Psoas muscle (tissue), 8 donors: ENCODE measurements at regions of chr17 and their contacts with region 1.

Region 1: GRCh38 chr17:76452660-76453430 is at the start of gene UBE2O:
- DNase-seq: peak; percentile 90 to 94
- ATAC-seq: peak; percentile 94 to 96 (median 96)
- H3K4me3 ChIP-seq: peak within 1 kb of the TSS; percentile 90
- H3K27ac ChIP-seq: peak within 1 kb of the TSS; percentile 89
- H3K4me1 ChIP-seq: peaks cover 31% of the 10 kb centered on the region
- H3K27me3 ChIP-seq: no peaks in the 10 kb centered on the region
- CTCF ChIP-seq: peak; percentile 33
- total RNA-seq, gene UBE2O: 37.3 to 45.5 (median 39.7) TPM

Region 2: DNA sequence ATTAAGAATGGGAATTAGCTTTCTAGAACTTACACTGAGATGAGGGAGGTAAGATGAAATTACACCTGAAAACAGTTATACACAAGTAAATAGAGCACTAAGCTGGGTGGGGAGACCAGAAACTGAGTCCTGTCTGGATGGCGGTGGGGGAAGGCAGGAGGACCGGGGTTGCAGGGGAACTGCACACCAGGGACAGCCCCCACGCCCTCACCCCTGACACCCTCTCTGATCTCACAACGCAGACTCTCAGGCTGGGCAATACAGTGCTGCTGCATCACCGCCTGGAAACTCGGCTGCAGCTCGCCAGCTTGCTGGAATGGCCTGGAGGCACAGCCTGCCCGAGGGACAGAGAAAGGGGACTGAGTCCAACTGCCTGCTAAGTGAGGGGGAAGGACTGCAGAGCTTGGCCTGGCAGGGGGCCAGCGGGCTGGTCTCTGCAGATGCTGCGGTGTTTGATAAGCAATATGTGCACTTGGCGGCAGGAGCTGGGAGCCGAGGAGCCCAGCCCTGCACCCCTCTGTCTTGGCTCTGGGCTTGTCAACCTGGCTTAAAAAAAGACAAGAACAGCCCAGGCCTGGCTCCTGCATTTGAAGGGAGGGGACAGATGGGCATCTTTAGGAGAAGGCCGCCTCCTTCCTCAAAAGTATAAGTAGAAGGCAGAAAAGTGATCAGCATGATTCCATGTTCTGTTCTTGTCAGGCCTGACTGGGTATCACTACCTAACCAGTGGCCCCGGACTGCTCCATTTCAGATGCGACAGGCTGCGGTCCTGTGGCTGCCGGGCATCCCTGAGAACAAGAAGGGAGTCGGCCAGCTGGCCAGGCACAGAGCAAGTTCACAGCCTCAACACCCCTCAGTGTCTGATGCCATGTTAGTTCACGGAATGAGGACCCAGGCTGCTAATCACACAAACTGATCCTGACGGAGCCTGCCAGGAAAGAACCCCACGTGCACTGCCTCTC is 38.2 kb before region 1 on chr17:
- intact Hi-C with region 1: loop called (anchors 5 kb)
- DNase-seq: peak; percentile 61 to 75
- ATAC-seq: peak; percentile 30 to 56 (median 43)
- H3K4me3 ChIP-seq: no peak overlapping the region
- H3K27ac ChIP-seq: peak overlapping the region; percentile 55
- H3K4me1 ChIP-seq: peaks cover 40% of the 10 kb centered on the region
- H3K27me3 ChIP-seq: no peaks in the 10 kb centered on the region
- CTCF ChIP-seq: no peak